B cell (primary cell): ENCODE measurements at regions of chr5 and their contacts with region 1.

Region 1: DNA sequence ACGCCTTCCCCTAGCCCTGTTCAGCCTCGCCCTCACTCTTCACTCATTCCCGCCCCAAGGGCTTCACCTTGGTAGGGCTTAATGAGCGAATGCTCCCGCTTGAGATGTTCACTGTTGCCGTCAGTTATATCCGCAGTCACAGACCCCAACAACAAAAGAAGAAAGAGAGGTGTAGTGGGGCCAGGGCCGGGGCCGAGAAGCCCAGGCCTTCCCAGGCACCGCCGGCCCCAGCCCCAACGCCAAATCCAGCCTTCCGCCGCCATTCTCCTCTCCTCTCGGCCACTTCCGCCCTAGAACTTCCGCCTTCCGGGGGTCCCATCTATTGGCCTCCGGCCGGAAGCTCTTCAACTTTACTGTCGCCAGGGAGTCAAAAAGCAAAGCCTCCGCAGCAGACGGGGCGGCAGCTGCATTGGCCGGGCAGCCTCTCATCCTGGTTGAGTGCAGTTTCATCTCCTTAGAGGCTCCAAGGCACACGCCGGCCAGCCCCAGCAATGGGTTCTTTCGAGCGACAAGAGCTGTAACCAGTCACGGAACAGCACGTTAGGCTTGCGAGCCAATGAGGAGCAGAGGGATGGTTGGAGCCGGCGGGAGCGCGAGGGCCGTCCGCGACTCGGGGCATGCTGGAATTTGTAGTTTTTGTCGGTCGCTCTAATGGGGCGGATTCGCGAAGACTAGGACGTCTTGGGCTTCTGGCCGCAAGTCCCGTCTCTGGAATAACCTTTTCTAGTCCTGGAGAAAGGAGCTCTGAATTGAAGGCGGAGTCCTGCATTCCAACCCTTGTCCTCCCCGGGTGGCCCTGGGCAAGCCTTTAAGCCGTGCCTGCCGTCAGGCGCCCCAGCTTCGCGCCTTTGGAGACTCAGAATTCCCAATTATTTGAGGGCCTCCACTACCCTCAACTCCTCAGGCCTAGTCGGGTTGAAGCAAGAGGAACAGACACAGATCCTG is at the start of gene LMAN2:
- DNase-seq: peak; percentile 97
- ATAC-seq: peak; percentile 99
- H3K4me3 ChIP-seq: peak within 1 kb of the TSS; percentile 85 to 97 (median 90)
- H3K4me3 Mint-ChIP-seq: peak within 1 kb of the TSS; percentile 96
- H3K27ac ChIP-seq: peak within 1 kb of the TSS; percentile 87 to 93
- H3K27ac Mint-ChIP-seq: peak within 1 kb of the TSS; percentile 100
- H3K4me1 ChIP-seq: peaks cover 32 to 38% of the 10 kb centered on the region in 2 donors
- H3K4me1 Mint-ChIP-seq: peaks cover 61% of the 10 kb centered on the region
- H3K27me3 ChIP-seq: no peaks in the 10 kb centered on the region
- H3K27me3 Mint-ChIP-seq: no peaks in the 10 kb centered on the region
- CTCF ChIP-seq: no peak
- total RNA-seq, gene LMAN2: 89.4 and 99.4 TPM in 2 replicates

Region 2: GRCh38 chr5:177133091-177133852 is 218.4 kb before region 1 on chr5 and contains the start of gene NSD1:
- CTCF ChIA-PET with region 1: no interaction called
- POLR2A ChIA-PET with region 1: no interaction called
- intact Hi-C with region 1: loop called (anchors 1 kb)
- DNase-seq: peak; percentile 97
- ATAC-seq: peak; percentile 79
- H3K4me3 ChIP-seq: peak within 1 kb of the TSS; percentile 65 to 80 (median 74)
- H3K4me3 Mint-ChIP-seq: peak within 1 kb of the TSS; percentile 86
- H3K27ac ChIP-seq: peak within 1 kb of the TSS; percentile 91 to 92
- H3K27ac Mint-ChIP-seq: peak within 1 kb of the TSS; percentile 96
- H3K4me1 ChIP-seq: peaks cover 33 to 50% of the 10 kb centered on the region in 2 donors
- H3K4me1 Mint-ChIP-seq: peaks cover 45% of the 10 kb centered on the region
- H3K27me3 ChIP-seq: no peaks in the 10 kb centered on the region
- H3K27me3 Mint-ChIP-seq: no peaks in the 10 kb centered on the region
- CTCF ChIP-seq: no peak
- total RNA-seq, gene NSD1: 145 and 152 TPM in 2 replicates

Region 3: GRCh38 chr5:177311723-177312648 is 39.7 kb before region 1 on chr5 and contains the start of gene MXD3:
- CTCF ChIA-PET with region 1: interaction called, 12 read pairs
- POLR2A ChIA-PET with region 1: interaction called, 5 read pairs
- intact Hi-C with region 1: no loop called
- DNase-seq: peak; percentile 94
- ATAC-seq: peak; percentile 89
- H3K4me3 ChIP-seq: peak within 1 kb of the TSS; percentile 15 to 80 (median 63)
- H3K4me3 Mint-ChIP-seq: peak within 1 kb of the TSS; percentile 90
- H3K27ac ChIP-seq: peak within 1 kb of the TSS; percentile 27 to 34
- H3K27ac Mint-ChIP-seq: peak within 1 kb of the TSS; percentile 84
- H3K4me1 ChIP-seq: peaks cover 40 to 58% of the 10 kb centered on the region in 2 donors
- H3K4me1 Mint-ChIP-seq: peaks cover 41% of the 10 kb centered on the region
- H3K27me3 ChIP-seq: no peaks in the 10 kb centered on the region
- H3K27me3 Mint-ChIP-seq: no peaks in the 10 kb centered on the region
- CTCF ChIP-seq: no peak
- total RNA-seq, gene MXD3: 10.8 and 11.5 TPM in 2 replicates

Region 4: GRCh38 chr5:177370488-177371119 is 18.9 kb after region 1 on chr5:
- CTCF ChIA-PET with region 1: interaction called, 60 read pairs
- POLR2A ChIA-PET with region 1: interaction called, 9 read pairs
- intact Hi-C with region 1: loop called (anchors 2 kb)
- DNase-seq: peak; percentile 63
- ATAC-seq: peak; percentile 75
- H3K4me3 ChIP-seq: peak overlapping the region in 1 of 5 experiments; percentile 42
- H3K4me3 Mint-ChIP-seq: peak overlapping the region; percentile 63
- H3K27ac ChIP-seq: no peak overlapping the region
- H3K27ac Mint-ChIP-seq: no peak overlapping the region
- H3K4me1 ChIP-seq: peaks cover 35 to 38% of the 10 kb centered on the region in 2 donors
- H3K4me1 Mint-ChIP-seq: peaks cover 42% of the 10 kb centered on the region
- H3K27me3 ChIP-seq: no peaks in the 10 kb centered on the region
- H3K27me3 Mint-ChIP-seq: no peaks in the 10 kb centered on the region
- CTCF ChIP-seq: peak; percentile 33

Region 5: DNA sequence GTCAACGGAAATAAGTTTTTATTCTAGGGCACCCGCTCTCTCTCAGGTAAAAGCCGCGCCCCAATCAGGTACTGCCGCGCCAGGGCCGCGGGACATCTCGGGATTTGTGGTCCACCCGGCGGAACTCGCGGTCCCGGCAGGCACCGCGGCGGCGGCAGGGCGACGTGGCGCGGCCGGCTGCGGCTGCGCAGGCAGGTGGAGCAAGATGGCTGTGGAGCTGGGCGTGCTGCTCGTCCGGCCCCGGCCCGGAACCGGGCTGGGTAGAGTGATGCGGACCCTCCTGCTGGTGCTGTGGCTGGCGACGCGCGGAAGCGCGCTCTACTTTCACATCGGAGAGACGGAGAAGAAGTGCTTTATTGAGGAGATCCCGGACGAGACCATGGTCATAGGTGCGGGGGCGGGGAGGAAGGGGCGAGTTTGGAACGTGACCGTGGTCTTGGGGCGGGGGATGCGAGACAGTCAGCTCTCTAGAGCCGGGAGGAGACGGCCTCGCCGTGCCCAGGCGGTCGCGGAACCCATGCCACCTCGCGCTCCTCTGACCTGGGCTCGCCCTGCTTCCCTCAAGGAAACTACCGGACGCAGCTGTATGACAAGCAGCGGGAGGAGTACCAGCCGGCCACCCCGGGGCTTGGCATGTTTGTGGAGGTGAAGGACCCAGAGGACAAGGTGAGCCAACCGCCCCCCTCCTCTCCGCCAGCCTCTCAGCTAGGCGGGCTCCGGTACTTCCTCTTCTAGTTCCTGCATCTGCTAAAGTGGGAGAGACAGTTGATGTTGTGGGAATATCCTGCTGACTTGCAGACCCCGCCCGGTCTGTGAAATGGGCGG is 240.6 kb after region 1 on chr5 and contains the start of gene TMED9:
- CTCF ChIA-PET with region 1: no interaction called
- POLR2A ChIA-PET with region 1: no interaction called
- intact Hi-C with region 1: loop called (anchors 2 kb)
- DNase-seq: peak; percentile 90
- ATAC-seq: peak; percentile 98
- H3K4me3 ChIP-seq: peak within 1 kb of the TSS; percentile 63 to 91 (median 88)
- H3K4me3 Mint-ChIP-seq: peak within 1 kb of the TSS; percentile 99
- H3K27ac ChIP-seq: peak within 1 kb of the TSS; percentile 62 to 82
- H3K27ac Mint-ChIP-seq: peak within 1 kb of the TSS; percentile 97
- H3K4me1 ChIP-seq: peaks cover 12 to 18% of the 10 kb centered on the region in 2 donors
- H3K4me1 Mint-ChIP-seq: peaks cover 19% of the 10 kb centered on the region
- H3K27me3 ChIP-seq: no peaks in the 10 kb centered on the region
- H3K27me3 Mint-ChIP-seq: peaks cover 5% of the 10 kb centered on the region
- CTCF ChIP-seq: no peak
- total RNA-seq, gene TMED9: 63.1 and 67.6 TPM in 2 replicates